Adrenal gland (tissue), 19 donors: ENCODE measurements at regions of chr15 and their contacts with region 1.

Region 1: DNA sequence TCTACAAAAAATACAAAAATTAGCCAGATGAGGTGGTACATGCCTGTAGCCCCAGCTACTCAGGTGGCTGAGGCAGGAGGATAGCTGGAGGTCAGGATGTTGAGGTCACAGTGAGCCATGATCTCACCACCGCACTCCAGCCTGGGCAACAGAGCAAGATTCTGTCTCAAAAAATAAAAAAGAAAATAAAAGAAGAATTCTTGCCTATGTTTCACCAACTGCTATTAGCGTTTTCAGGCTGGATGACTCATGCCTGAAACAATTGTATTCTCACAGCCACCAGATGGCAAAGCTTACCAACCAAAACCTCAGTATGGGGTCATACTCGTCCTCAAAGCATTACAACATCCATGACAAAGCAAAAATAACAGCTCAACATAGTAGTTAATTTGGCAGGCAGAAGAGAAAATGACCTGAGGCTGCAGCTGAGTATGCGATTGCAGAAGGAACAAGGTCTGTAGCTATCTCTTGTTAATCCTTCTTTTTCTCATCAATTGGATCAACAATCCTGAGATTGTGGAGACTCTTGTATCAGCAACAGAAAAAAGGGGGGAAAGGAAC is 52.2 kb downstream of the TP53BP1 start:
- DNase-seq: peak; percentile 52 to 87 (median 74)
- H3K4me3 ChIP-seq: no peak overlapping the region
- H3K27ac ChIP-seq: peak overlapping the region; percentile 29 to 87 (median 82)
- H3K4me1 ChIP-seq: peaks cover 0 to 16% of the 10 kb centered on the region in 2 donors
- H3K27me3 ChIP-seq: no peaks in the 10 kb centered on the region
- CTCF ChIP-seq: peak; percentile 16 to 89 (median 80)
- POLR2A ChIP-seq: peak in 1 of 2 donors; percentile 52

Region 2: GRCh38 chr15:43492673-43493601 is 52.1 kb after region 1 on chr15 and contains the start of gene TP53BP1:
- intact Hi-C with region 1: no loop called
- DNase-seq: peak; percentile 96 to 100 (median 99)
- H3K4me3 ChIP-seq: peak within 1 kb of the TSS in 3 of 4 donors; percentile 69 to 90 (median 83)
- H3K27ac ChIP-seq: peak within 1 kb of the TSS; percentile 69 to 94 (median 80)
- H3K4me1 ChIP-seq: peaks cover 12 to 26% of the 10 kb centered on the region in 2 donors
- H3K27me3 ChIP-seq: no peaks in the 10 kb centered on the region
- CTCF ChIP-seq: no peak
- POLR2A ChIP-seq: peak; percentile 18 to 51
- total RNA-seq, gene TP53BP1: 22.8 to 80.9 (median 45.6) TPM

Region 3: DNA sequence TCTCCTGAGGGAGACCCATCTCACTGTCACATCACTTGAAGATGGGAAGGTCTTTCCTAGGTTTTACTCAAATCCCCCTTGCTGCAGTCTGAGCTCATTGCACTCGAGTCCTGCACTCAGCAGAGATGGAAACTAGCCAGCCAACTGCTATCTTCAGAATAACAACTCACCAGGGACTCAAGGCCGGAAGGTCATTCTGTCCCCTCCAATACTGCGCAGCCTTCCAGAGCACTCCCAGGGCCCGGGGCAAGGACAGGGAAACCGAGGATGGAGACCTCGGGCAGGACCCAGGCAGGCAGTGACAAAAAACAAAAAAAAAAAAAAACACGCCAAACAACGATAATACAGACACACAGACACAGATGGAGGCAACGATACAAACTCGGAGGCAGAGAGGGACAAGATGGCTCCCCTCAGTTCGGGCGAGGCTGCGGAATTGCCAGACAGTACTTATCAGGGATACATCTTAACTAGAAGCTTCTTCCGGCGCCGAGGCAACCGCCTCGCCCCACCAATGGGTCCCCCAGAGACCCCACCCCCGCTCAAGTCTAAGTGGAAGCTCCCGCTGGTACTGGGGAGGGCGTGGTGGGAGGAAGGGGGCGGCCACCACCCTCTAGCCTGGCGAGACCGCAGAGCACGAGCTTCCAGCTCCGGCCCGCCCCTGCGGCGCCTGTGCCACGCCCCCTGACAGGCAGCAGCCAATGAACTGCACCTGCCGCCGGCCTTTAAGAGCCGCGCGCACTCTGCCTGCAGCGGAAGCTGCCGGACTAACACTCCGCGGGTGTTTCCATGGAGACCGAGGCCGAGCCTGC is 69.6 kb after region 1 on chr15:
- intact Hi-C with region 1: loop called (anchors 5 to 10 kb)
- DNase-seq: peak; percentile 99 to 100 (median 99)
- H3K4me3 ChIP-seq: peak overlapping the region in 3 of 4 donors; percentile 53 to 57 (median 53)
- H3K27ac ChIP-seq: peak overlapping the region; percentile 79 to 93 (median 89)
- H3K4me1 ChIP-seq: peaks cover 19 to 29% of the 10 kb centered on the region in 2 donors
- H3K27me3 ChIP-seq: no peaks in the 10 kb centered on the region
- CTCF ChIP-seq: peak; percentile 17 to 53 (median 44)
- POLR2A ChIP-seq: peak; percentile 54 to 92

Region 4: DNA sequence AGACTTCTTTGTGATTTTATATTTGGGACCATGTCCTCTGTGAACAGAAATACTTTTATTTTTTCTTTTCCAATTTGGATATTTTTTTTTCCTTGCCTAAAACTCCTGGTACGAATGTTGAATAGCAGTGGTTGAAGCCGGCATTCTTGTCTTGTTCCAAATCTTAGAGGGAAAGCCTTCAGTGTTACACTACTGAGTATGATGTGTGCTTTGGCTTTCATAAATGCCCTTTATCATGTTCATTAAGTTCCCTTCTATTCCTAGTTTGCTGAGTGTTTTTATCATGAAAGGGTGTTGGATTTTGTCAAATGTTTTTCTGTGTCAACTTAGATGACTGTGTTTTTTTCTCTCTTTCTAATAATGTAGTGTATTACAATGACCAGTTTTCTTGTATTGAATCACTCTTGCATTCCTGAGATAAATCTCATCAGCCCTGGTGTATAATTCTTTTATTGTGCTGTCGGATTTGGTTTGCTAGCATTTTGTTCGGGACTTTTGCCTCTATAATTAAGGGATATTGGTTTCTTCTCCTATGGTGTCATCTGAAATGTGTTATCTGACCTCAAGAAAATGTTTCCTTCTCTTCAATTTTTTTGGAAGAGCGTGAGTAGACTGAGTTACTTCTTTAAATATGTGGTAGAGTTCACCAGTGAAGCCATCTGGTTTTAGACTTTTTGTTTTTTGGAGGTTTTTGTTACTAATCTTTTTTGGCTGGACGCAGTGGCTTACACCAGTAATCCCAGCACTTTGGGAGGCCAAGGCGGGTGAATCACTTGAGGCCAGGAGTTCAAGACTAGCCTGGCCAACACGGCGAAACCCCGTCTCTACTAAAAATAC is 109.9 kb after region 1 on chr15:
- intact Hi-C with region 1: no loop called
- DNase-seq: no peak
- H3K4me3 ChIP-seq: no peak overlapping the region
- H3K27ac ChIP-seq: no peak overlapping the region
- H3K4me1 ChIP-seq: no peaks in the 10 kb centered on the region
- H3K27me3 ChIP-seq: no peaks in the 10 kb centered on the region
- CTCF ChIP-seq: no peak
- POLR2A ChIP-seq: no peak